Heart left ventricle (tissue), 16 donors: ENCODE measurements at regions of chr18 and their contacts with region 1.

Region 1: DNA sequence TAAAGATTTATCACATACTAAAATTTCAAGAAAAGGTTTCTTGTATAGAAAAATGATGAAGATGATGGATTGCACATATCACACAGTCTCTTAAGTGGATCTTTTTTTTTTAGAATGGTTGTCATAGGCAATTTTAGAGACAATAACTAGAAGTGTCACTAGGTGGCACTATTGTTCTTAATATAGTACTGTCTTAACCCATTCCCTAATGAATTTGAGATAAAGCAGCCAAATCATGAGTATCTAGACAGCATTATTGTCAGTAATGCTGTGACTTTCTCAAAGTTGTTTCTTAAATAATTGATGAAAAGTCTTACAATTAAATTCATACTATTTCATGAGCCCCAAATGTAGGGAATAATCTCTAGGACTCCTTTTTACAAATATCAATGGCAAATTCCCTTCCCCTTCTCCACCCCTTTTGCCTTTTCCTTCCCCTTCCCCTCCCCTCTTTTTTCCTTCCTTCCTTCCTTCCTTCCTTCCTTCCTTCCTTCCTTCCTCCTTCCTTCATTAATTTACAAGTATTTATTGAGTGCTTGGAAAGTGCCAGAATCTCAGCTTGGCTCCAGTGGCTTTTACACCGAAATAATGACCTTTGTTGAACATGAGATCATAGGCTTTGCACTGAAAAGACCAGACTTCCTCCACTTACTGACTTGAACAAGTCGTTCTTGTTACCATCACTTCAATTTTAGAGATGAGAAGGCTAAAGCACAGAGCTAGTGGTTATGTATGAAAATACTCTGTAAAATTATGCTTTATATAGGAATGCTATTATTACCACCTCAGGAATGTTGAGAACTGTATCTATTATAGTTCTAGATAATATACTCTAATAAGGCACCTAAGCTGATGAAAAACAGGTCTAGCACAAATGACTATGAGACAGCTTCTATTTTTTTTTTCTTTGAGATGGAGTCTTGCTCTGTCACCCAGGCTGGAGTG is 19.8 kb downstream of the MYL12B start:
- DNase-seq: no peak
- ATAC-seq: peak; percentile 73 to 85 (median 82)
- H3K4me3 ChIP-seq: no peak overlapping the region
- H3K27ac ChIP-seq: peak overlapping the region in 6 of 12 donors; percentile 9 to 56 (median 51)
- H3K4me1 ChIP-seq: peaks cover 0 to 22% (median 9%) of the 10 kb centered on the region in 12 donors
- H3K27me3 ChIP-seq: no peaks in the 10 kb centered on the region
- CTCF ChIP-seq: peak; percentile 55 to 83 (median 75)
- POLR2A ChIP-seq: no peak

Region 2: GRCh38 chr18:3230401-3231334 is 51.1 kb before region 1 on chr18:
- intact Hi-C with region 1: no loop called
- DNase-seq: no peak
- ATAC-seq: no peak
- H3K4me3 ChIP-seq: no peak overlapping the region
- H3K27ac ChIP-seq: no peak overlapping the region
- H3K4me1 ChIP-seq: peaks cover 0 to 10% (median 0%) of the 10 kb centered on the region in 12 donors
- H3K27me3 ChIP-seq: no peaks in the 10 kb centered on the region
- CTCF ChIP-seq: no peak
- POLR2A ChIP-seq: no peak

Region 3: GRCh38 chr18:3447895-3448837 is 166.4 kb after region 1 on chr18:
- intact Hi-C with region 1: loop called in 4 of 10 experiments (anchors 2 to 5 kb)
- DNase-seq: peak; percentile 94 to 96 (median 96)
- ATAC-seq: peak; percentile 86 to 92 (median 87)
- H3K4me3 ChIP-seq: peak overlapping the region; percentile 65 to 93 (median 78)
- H3K27ac ChIP-seq: peak overlapping the region; percentile 92 to 100 (median 97)
- H3K4me1 ChIP-seq: peaks cover 0 to 27% (median 13%) of the 10 kb centered on the region in 12 donors
- H3K27me3 ChIP-seq: no peaks in the 10 kb centered on the region
- CTCF ChIP-seq: peak in 4 of 12 donors; percentile 3 to 31 (median 20)
- POLR2A ChIP-seq: peak in 1 of 2 donors; percentile 91

Region 4: DNA sequence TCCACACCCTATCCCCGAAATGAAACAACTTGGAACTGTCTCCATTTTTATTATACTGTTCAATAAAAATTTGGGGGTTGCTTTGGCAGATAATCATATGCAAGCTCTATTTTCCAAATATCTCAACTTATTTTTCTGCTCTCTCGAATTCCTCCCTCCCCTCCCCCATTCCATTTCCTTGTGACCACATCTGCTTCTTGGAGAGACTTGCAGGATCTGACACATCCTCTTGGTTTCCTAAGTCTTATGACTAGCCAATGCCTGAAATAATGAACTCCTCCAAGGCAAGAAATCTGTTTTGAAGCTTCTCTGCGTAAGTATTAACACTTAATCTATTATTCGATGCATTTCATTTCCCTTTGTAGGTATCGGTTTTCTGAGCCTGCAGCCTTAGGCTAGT is 184.3 kb after region 1 on chr18:
- intact Hi-C with region 1: loop called in 1 of 10 experiments (anchors 2 kb)
- DNase-seq: peak in 1 of 5 donors; percentile 35
- ATAC-seq: peak in 3 of 4 donors; percentile 55 to 84 (median 59)
- H3K4me3 ChIP-seq: peak overlapping the region in 3 of 12 donors; percentile 0 to 15 (median 8)
- H3K27ac ChIP-seq: peak overlapping the region in 3 of 12 donors; percentile 19 to 53 (median 35)
- H3K4me1 ChIP-seq: peaks cover 0 to 18% (median 7%) of the 10 kb centered on the region in 12 donors
- H3K27me3 ChIP-seq: no peaks in the 10 kb centered on the region
- CTCF ChIP-seq: no peak
- POLR2A ChIP-seq: no peak

Region 5: DNA sequence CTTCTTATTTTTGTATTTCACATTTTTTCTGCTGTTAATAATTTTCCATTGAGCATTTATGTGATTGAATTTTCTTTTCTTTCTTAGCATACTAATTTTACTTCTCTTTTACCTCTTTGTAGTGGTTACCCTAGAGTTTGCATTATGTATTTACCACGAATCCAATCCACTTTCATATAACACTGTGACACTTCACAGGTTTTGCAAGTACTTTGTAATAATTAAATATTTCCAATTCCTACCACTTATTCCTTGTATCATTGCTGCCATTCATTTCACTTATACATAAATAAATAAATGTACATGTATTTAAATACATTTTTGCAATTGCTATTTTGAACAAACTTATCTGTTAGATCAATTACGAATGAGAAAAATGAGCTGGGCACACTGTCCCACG is 279.0 kb after region 1 on chr18:
- intact Hi-C with region 1: no loop called
- DNase-seq: no peak
- ATAC-seq: no peak
- H3K4me3 ChIP-seq: no peak overlapping the region
- H3K27ac ChIP-seq: no peak overlapping the region
- H3K4me1 ChIP-seq: no peaks in the 10 kb centered on the region
- H3K27me3 ChIP-seq: no peaks in the 10 kb centered on the region
- CTCF ChIP-seq: no peak
- POLR2A ChIP-seq: no peak

Region 6: GRCh38 chr18:3585656-3586509 is 304.2 kb after region 1 on chr18:
- intact Hi-C with region 1: loop called in 9 of 10 experiments (anchors 5 kb)
- DNase-seq: peak; percentile 69 to 83 (median 76)
- ATAC-seq: peak; percentile 55 to 95 (median 88)
- H3K4me3 ChIP-seq: no peak overlapping the region
- H3K27ac ChIP-seq: no peak overlapping the region
- H3K4me1 ChIP-seq: peaks cover 0 to 9% (median 0%) of the 10 kb centered on the region in 12 donors
- H3K27me3 ChIP-seq: no peaks in the 10 kb centered on the region
- CTCF ChIP-seq: peak; percentile 60 to 84 (median 70)
- POLR2A ChIP-seq: no peak

Region 7: DNA sequence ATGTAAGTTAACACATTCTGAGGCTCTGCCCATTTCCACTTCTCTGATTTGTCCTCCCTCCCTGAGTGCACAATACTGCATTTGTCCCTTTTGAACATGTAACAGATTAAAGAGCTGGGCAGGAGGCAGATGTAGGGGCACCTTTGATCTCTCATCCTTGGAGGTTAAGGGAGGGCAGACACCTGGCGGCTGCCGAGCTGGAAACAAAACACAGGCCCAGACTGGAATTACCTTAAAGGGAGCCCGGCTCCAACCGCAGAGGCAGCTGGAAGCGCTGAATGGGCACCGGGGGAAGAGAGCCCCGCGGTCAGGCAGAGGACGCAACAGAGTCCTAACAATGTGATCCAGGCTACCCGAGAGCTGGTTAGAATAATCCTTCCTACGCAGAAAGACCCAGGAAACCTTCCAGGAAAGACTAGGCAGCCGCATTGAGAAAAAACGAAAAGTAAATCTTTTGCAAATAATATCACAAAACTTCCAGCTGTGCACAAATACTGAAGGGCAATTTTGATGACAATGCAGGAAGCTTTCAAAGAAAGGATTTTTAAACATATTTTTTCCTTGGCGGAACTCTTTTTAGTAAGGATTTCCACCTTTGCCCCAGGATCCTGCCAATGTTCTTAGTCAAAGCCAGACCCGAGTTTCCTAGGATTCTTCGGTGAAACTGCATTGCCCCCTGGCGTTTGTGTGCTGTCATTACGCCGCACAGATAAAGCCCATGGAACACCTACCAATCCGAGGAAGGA is 384.2 kb after region 1 on chr18:
- intact Hi-C with region 1: loop called (anchors 1 to 2 kb)
- DNase-seq: peak; percentile 73 to 86 (median 78)
- ATAC-seq: peak; percentile 76 to 94 (median 90)
- H3K4me3 ChIP-seq: peak overlapping the region in 10 of 12 donors; percentile 20 to 43 (median 33)
- H3K27ac ChIP-seq: peak overlapping the region in 9 of 12 donors; percentile 8 to 68 (median 53)
- H3K4me1 ChIP-seq: peaks cover 0 to 27% (median 3%) of the 10 kb centered on the region in 12 donors
- H3K27me3 ChIP-seq: no peaks in the 10 kb centered on the region
- CTCF ChIP-seq: peak; percentile 87 to 98 (median 91)
- POLR2A ChIP-seq: no peak

Region 8: GRCh38 chr18:3983351-3983969 is 701.7 kb after region 1 on chr18:
- intact Hi-C with region 1: loop called in 1 of 10 experiments (anchors 10 kb)
- DNase-seq: no peak
- ATAC-seq: no peak
- H3K4me3 ChIP-seq: no peak overlapping the region
- H3K27ac ChIP-seq: no peak overlapping the region
- H3K4me1 ChIP-seq: peaks cover 0 to 9% (median 0%) of the 10 kb centered on the region in 12 donors
- H3K27me3 ChIP-seq: no peaks in the 10 kb centered on the region
- CTCF ChIP-seq: no peak
- POLR2A ChIP-seq: no peak